ENCODE measurements at regions of chr12 and their contacts with region 1.

Region 1: GRCh38 chr12:40010899-40011774 is 94.7 kb downstream of the SLC2A13 start:
- DNase-seq: peak; percentile 61 to 67 (median 64)
- H3K4me3 ChIP-seq: peak overlapping the region in 1 of 2 donors; percentile 30
- H3K4me3 Mint-ChIP-seq: peak overlapping the region; percentile 44 to 81 (median 76)
- H3K27ac ChIP-seq: no peak overlapping the region
- H3K27ac Mint-ChIP-seq: peak overlapping the region in 2 of 7 donors; percentile 23 to 26
- H3K4me1 ChIP-seq: peaks cover 6% of the 10 kb centered on the region
- H3K4me1 Mint-ChIP-seq: peaks cover 10 to 14% (median 10%) of the 10 kb centered on the region in 4 donors
- H3K27me3 ChIP-seq: no peaks in the 10 kb centered on the region
- H3K27me3 Mint-ChIP-seq: no peaks in the 10 kb centered on the region

Region 2: GRCh38 chr12:40034712-40035111 is 23.6 kb after region 1 on chr12:
- CTCF ChIA-PET with region 1: interaction called, 16 read pairs
- POLR2A ChIA-PET with region 1: no interaction called
- intact Hi-C with region 1: no loop called
- DNase-seq: no peak
- H3K4me3 ChIP-seq: no peak overlapping the region
- H3K4me3 Mint-ChIP-seq: no peak overlapping the region
- H3K27ac ChIP-seq: no peak overlapping the region
- H3K27ac Mint-ChIP-seq: no peak overlapping the region
- H3K4me1 ChIP-seq: no peaks in the 10 kb centered on the region
- H3K4me1 Mint-ChIP-seq: peaks cover 0 to 3% (median 0%) of the 10 kb centered on the region in 4 donors
- H3K27me3 ChIP-seq: no peaks in the 10 kb centered on the region
- H3K27me3 Mint-ChIP-seq: no peaks in the 10 kb centered on the region

Region 3: DNA sequence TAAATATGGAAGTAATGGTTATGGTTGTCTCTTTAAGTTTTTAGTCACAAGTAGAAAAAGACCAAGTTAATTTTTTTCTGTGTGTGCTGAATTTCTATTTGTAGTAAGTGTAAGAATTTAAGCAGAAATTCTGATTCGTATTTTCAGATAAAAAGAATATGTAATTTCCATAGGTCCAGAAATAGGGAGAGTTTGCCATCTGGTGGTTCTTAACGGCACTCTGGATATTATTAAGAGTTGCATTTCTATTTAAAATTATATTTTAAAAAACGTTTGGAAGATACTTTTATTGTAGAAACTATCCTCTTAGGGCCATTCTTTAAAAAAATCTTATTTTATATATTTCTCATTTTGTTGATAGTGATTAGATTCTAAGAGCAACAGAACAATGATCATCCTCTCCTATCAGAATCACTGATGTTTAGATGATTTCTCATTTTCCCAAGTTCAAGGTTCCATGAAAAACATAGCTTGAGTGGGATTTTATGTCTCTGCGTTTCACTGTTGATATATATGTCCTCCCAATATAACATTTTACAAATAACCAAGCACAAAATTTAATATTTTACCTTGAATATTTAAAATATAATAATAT is 301.9 kb after region 1 on chr12:
- CTCF ChIA-PET with region 1: no interaction called
- POLR2A ChIA-PET with region 1: no interaction called
- intact Hi-C with region 1: loop called (anchors 10 kb)
- DNase-seq: peak in 1 of 5 donors; percentile 4
- H3K4me3 ChIP-seq: no peak overlapping the region
- H3K4me3 Mint-ChIP-seq: no peak overlapping the region
- H3K27ac ChIP-seq: no peak overlapping the region
- H3K27ac Mint-ChIP-seq: no peak overlapping the region
- H3K4me1 ChIP-seq: no peaks in the 10 kb centered on the region
- H3K4me1 Mint-ChIP-seq: no peaks in the 10 kb centered on the region
- H3K27me3 ChIP-seq: no peaks in the 10 kb centered on the region
- H3K27me3 Mint-ChIP-seq: no peaks in the 10 kb centered on the region

Region 4: GRCh38 chr12:40921563-40922163 is 910.5 kb after region 1 on chr12:
- CTCF ChIA-PET with region 1: no interaction called
- POLR2A ChIA-PET with region 1: no interaction called
- intact Hi-C with region 1: loop called (anchors 5 kb)
- DNase-seq: no peak
- H3K4me3 ChIP-seq: no peak overlapping the region
- H3K4me3 Mint-ChIP-seq: no peak overlapping the region
- H3K27ac ChIP-seq: no peak overlapping the region
- H3K27ac Mint-ChIP-seq: no peak overlapping the region
- H3K4me1 ChIP-seq: no peaks in the 10 kb centered on the region
- H3K4me1 Mint-ChIP-seq: peaks cover 0 to 3% (median 0%) of the 10 kb centered on the region in 4 donors
- H3K27me3 ChIP-seq: peaks cover 4% of the 10 kb centered on the region
- H3K27me3 Mint-ChIP-seq: no peaks in the 10 kb centered on the region